ENCODE measurements at regions of chr1 and their contacts with region 1.

Region 1: GRCh38 chr1:9455487-9456234 is 83.6 kb upstream of the SLC25A33 start:
- DNase-seq: peak; percentile 74 to 88
- ATAC-seq: peak; percentile 78 to 90 (median 84)
- H3K4me3 ChIP-seq: no peak overlapping the region
- H3K27ac ChIP-seq: no peak overlapping the region
- H3K4me1 ChIP-seq: peaks cover 25% of the 10 kb centered on the region
- H3K27me3 ChIP-seq: no peaks in the 10 kb centered on the region
- CTCF ChIP-seq: peak; percentile 87

Region 2: GRCh38 chr1:9110669-9111356 is 344.8 kb before region 1 on chr1:
- intact Hi-C with region 1: loop called in 1 of 2 experiments (anchors 10 kb)
- DNase-seq: peak; percentile 91 to 94
- ATAC-seq: peak; percentile 66 to 81 (median 76)
- H3K4me3 ChIP-seq: no peak overlapping the region
- H3K27ac ChIP-seq: no peak overlapping the region
- H3K4me1 ChIP-seq: peaks cover 10% of the 10 kb centered on the region
- H3K27me3 ChIP-seq: no peaks in the 10 kb centered on the region
- CTCF ChIP-seq: peak; percentile 92

Region 3: GRCh38 chr1:9269078-9269501 is 186.6 kb before region 1 on chr1:
- intact Hi-C with region 1: loop called (anchors 2 to 5 kb)
- DNase-seq: peak in 1 of 2 donors; percentile 43
- ATAC-seq: peak in 1 of 4 donors; percentile 21
- H3K4me3 ChIP-seq: no peak overlapping the region
- H3K27ac ChIP-seq: no peak overlapping the region
- H3K4me1 ChIP-seq: peaks cover 34% of the 10 kb centered on the region
- H3K27me3 ChIP-seq: no peaks in the 10 kb centered on the region
- CTCF ChIP-seq: no peak

Region 4: DNA sequence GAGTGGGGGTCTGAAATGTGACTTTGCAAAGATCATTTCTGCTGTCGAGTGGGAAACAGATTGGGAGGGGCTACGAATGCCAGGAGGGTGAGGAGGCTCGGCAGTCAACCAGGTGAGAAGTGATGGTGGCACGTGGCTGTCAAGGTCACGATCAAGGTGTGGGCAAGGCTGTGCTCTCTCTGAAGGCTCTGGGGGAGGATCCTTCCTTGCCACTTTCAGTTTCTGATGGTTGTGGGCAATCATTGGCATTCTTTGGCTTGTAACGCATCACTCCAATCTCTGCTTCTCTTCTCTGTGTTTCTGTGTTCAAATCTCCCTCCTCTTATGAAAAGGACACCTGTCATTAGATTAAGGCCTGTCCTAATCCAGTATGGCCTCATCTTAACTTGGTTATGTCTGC is 169.1 kb before region 1 on chr1:
- intact Hi-C with region 1: loop called (anchors 2 kb)
- DNase-seq: peak in 1 of 2 donors; percentile 5
- ATAC-seq: no peak
- H3K4me3 ChIP-seq: no peak overlapping the region
- H3K27ac ChIP-seq: no peak overlapping the region
- H3K4me1 ChIP-seq: peaks cover 14% of the 10 kb centered on the region
- H3K27me3 ChIP-seq: no peaks in the 10 kb centered on the region
- CTCF ChIP-seq: no peak

Region 5: GRCh38 chr1:9292361-9293240 is 163.1 kb before region 1 on chr1 and contains the start of gene SPSB1:
- intact Hi-C with region 1: loop called (anchors 2 kb)
- DNase-seq: peak; percentile 77 to 86
- ATAC-seq: peak; percentile 38 to 64 (median 57)
- H3K4me3 ChIP-seq: peak within 1 kb of the TSS; percentile 93
- H3K27ac ChIP-seq: peak within 1 kb of the TSS; percentile 86
- H3K4me1 ChIP-seq: peaks cover 41% of the 10 kb centered on the region
- H3K27me3 ChIP-seq: no peaks in the 10 kb centered on the region
- CTCF ChIP-seq: no peak
- total RNA-seq, gene SPSB1: 12.0 to 60.7 (median 42.1) TPM

Region 6: GRCh38 chr1:9561429-9561828 is 105.8 kb after region 1 on chr1:
- intact Hi-C with region 1: no loop called
- DNase-seq: no peak
- ATAC-seq: peak; percentile 77 to 82 (median 82)
- H3K4me3 ChIP-seq: no peak overlapping the region
- H3K27ac ChIP-seq: no peak overlapping the region
- H3K4me1 ChIP-seq: peaks cover 41% of the 10 kb centered on the region
- H3K27me3 ChIP-seq: no peaks in the 10 kb centered on the region
- CTCF ChIP-seq: no peak

Region 7: GRCh38 chr1:9671377-9672140 is 215.9 kb after region 1 on chr1:
- intact Hi-C with region 1: no loop called
- DNase-seq: no peak
- ATAC-seq: no peak
- H3K4me3 ChIP-seq: no peak overlapping the region
- H3K27ac ChIP-seq: no peak overlapping the region
- H3K4me1 ChIP-seq: no peaks in the 10 kb centered on the region
- H3K27me3 ChIP-seq: peaks cover 0 to 6% (median 5%) of the 10 kb centered on the region in 3 donors
- CTCF ChIP-seq: no peak